ENCODE measurements at regions of chr14 and their contacts with region 1.

Region 1: DNA sequence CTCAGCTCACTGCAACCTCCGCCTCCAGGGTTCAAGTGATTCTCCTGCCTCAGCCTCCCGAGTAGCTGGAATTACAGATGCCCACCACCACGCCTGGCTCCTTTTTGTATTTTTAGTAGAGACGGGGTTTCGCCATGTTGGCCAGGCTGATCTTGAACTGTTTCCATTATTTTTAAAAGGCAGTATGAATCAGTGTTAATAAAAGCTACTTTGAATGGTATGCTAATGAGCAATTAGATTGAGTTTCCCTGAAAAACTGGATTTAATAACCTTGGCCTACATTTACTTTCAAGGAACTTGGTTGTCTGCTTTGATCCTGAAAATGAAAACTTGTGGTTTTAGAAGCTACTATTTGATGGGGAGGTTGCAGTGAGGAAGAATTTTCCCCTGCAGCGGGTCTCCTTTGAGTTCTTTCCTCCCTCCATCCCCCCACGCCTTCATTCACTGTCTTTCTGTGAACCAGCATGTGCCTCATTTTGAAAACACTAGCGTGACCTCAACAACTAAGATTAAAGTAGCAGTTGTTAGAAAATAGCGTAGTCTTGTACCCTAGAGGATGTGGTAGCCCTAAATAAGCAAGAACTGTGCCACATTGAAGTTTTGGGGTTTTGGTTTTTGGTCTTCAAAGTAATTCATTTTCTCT is 17.8 kb upstream of the RPS6KA5 start:
- DNase-seq: peak in 8 of 14 experiments; percentile 8 to 90 (median 47)
- ATAC-seq: peak; percentile 99
- H3K4me3 ChIP-seq: no peak overlapping the region
- H3K4me3 Mint-ChIP-seq: peak overlapping the region; percentile 9
- H3K27ac ChIP-seq: peak overlapping the region in 1 of 2 donors; percentile 29
- H3K27ac Mint-ChIP-seq: peak overlapping the region; percentile 37
- H3K4me1 ChIP-seq: peaks cover 29% of the 10 kb centered on the region
- H3K4me1 Mint-ChIP-seq: peaks cover 30% of the 10 kb centered on the region
- H3K27me3 ChIP-seq: no peaks in the 10 kb centered on the region
- H3K27me3 Mint-ChIP-seq: no peaks in the 10 kb centered on the region
- CTCF ChIP-seq: no peak

Region 2: GRCh38 chr14:91108941-91109611 is 30.9 kb after region 1 on chr14:
- CTCF ChIA-PET with region 1: no interaction called
- POLR2A ChIA-PET with region 1: interaction called, 34 read pairs
- intact Hi-C with region 1: no loop called
- DNase-seq: peak in 13 of 14 experiments; percentile 12 to 71 (median 41)
- ATAC-seq: peak; percentile 27
- H3K4me3 ChIP-seq: no peak overlapping the region
- H3K4me3 Mint-ChIP-seq: peak overlapping the region; percentile 64
- H3K27ac ChIP-seq: peak overlapping the region; percentile 4 to 69
- H3K27ac Mint-ChIP-seq: peak overlapping the region; percentile 95
- H3K4me1 ChIP-seq: peaks cover 40% of the 10 kb centered on the region
- H3K4me1 Mint-ChIP-seq: peaks cover 45% of the 10 kb centered on the region
- H3K27me3 ChIP-seq: no peaks in the 10 kb centered on the region
- H3K27me3 Mint-ChIP-seq: no peaks in the 10 kb centered on the region
- CTCF ChIP-seq: no peak

Region 3: DNA sequence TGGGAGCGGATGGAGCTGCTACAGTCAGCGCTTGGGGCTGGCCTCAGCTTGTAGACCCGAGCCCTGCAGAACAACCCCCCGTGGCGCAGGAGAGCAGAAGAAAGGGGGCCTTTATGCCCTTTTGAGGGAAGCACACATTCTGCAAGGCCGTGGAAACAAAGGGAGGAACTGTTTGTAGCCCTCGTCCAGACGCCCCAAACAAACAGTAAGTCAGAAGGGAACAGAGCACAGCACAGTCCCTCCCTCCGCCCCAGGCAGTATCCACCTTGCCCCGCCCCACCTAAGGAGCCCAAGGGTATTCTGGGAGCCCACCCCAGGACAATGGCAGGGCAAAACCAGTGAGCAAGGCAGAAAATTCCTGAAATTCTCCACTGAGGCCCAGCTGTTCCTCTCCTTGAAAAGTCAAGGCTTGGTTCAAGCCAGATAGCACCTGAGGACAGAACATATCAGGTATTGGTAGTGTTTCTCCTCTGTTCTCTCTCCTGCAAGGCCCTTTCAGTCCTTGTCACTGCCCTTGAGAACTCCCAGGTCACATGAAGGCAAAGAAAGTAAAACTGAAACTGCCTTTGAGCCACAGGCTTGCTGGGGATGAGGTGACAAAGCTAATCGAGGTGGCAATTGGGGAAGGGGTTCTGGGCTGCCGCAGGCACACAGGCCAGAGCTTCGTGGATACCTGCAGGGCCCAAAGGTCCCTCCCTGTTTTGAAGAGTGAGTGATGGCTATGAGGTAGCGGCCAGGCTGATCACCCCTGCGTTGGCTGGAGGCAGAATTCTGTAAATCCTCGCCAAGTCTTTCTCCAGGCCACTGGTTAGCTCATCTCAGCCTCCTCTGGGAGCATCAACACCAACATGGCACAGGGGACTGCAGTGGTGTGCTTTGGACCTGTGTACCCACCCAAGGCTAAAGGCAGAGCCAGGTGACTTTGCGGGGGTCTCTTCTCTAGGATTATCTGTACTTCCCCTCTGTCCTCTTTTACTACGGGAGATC is 36.2 kb after region 1 on chr14:
- CTCF ChIA-PET with region 1: no interaction called
- POLR2A ChIA-PET with region 1: interaction called, 34 read pairs
- intact Hi-C with region 1: no loop called
- DNase-seq: peak; percentile 30 to 89 (median 54)
- ATAC-seq: peak; percentile 77
- H3K4me3 ChIP-seq: peak overlapping the region; percentile 62
- H3K4me3 Mint-ChIP-seq: peak overlapping the region; percentile 92
- H3K27ac ChIP-seq: peak overlapping the region; percentile 83 to 88
- H3K27ac Mint-ChIP-seq: peak overlapping the region; percentile 91
- H3K4me1 ChIP-seq: peaks cover 65% of the 10 kb centered on the region
- H3K4me1 Mint-ChIP-seq: peaks cover 74% of the 10 kb centered on the region
- H3K27me3 ChIP-seq: no peaks in the 10 kb centered on the region
- H3K27me3 Mint-ChIP-seq: no peaks in the 10 kb centered on the region
- CTCF ChIP-seq: no peak